ENCODE measurements at regions of chr1 and their contacts with region 1.

Region 1: DNA sequence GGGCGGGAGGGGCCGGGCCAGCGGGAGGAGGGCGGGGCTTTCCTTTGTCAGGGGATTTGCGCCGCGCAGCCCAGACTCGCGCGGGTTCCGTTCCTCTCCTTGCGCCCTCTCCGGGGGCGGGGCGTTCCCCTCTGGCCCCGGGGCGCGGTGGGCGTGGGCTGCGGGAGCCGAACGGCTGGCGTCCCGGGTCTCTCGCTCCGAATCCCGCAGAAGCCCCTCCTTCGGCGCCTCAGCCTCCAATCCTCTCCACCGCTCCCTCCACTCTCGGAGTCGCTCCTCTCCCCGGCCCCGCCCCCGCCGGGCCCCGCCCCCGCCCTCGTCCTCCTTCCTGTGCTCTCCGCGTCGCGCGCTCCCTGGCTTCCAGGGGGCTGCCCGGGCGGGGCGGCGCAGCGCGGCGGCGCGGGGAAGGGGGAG is 82.8 kb upstream of the BMP8A start:
- DNase-seq: peak; percentile 93
- ATAC-seq: peak; percentile 84
- H3K4me3 ChIP-seq: peak overlapping the region; percentile 70 to 89 (median 88); a peak in 5 of 6 replicates
- H3K27ac ChIP-seq: peak overlapping the region; percentile 97
- H3K4me1 ChIP-seq: peaks cover 70% of the 10 kb centered on the region
- H3K27me3 ChIP-seq: no peaks in the 10 kb centered on the region; a peak in 1 of 5 replicates
- CTCF ChIP-seq: no peak
- EP300 ChIP-seq: no peak
- POLR2A ChIP-seq: no peak; a peak in 1 of 4 replicates
- RAD21 ChIP-seq: no peak

Region 2: DNA sequence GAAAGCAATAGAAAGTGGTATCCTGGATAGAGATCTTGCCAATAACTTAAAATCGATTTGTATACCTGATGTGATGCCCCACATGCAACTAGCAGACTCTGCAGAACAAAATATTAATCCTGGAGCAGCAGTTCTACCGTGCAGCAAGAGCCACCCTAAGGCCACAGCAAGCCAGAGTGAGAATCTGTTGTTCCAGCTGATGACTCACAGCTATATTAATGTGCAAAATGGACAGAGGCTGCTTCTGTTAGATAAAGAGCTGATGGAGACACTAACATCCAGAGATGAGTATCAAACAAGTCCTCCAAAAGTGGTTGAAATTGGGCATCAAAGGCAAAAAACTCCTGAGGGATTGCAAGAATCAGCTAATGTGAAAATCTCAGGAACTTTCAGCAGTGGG is 76.4 kb before region 1 on chr1:
- CTCF ChIA-PET with region 1: no interaction called
- POLR2A ChIA-PET with region 1: no interaction called
- in situ Hi-C with region 1: no loop called
- intact Hi-C with region 1: no loop called
- DNase-seq: no peak
- ATAC-seq: no peak
- H3K4me3 ChIP-seq: no peak overlapping the region
- H3K27ac ChIP-seq: no peak overlapping the region
- H3K4me1 ChIP-seq: no peaks in the 10 kb centered on the region
- H3K27me3 ChIP-seq: no peaks in the 10 kb centered on the region
- CTCF ChIP-seq: no peak
- EP300 ChIP-seq: no peak
- POLR2A ChIP-seq: no peak
- RAD21 ChIP-seq: no peak

Region 3: DNA sequence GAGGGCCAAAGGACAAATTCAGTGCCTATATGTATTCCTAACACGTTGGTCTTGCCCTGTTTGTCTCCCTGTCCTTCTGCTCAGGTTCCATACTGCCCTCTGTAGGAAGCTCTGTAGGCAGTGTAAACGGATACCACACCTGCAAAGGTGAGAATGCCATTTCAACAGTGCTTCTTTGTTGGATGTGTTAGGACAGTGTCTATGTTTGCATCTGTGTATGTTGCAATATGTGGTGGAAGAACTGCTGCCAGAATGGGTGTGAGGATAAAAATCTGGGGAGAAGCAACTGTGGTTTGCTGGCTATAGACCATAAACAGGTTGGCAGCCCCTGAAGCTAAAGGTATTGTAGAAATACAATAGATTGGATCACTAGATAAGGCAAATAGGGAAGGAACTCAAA is 30.3 kb before region 1 on chr1:
- CTCF ChIA-PET with region 1: interaction called, 5 read pairs
- POLR2A ChIA-PET with region 1: interaction called, 9 read pairs
- in situ Hi-C with region 1: no loop called
- intact Hi-C with region 1: loop called (anchors 1 kb)
- DNase-seq: peak; percentile 89
- ATAC-seq: peak; percentile 99
- H3K4me3 ChIP-seq: no peak overlapping the region
- H3K27ac ChIP-seq: no peak overlapping the region
- H3K4me1 ChIP-seq: peaks cover 11% of the 10 kb centered on the region
- H3K27me3 ChIP-seq: no peaks in the 10 kb centered on the region
- CTCF ChIP-seq: peak; percentile 93
- EP300 ChIP-seq: peak in 1 of 2 experiments; percentile 42; a peak in 1 of 4 replicates
- POLR2A ChIP-seq: no peak
- RAD21 ChIP-seq: peak; percentile 42; the same call in 1 of the 2 replicates

Region 4: GRCh38 chr1:39391691-39392679 is 16.7 kb before region 1 on chr1:
- CTCF ChIA-PET with region 1: interaction called, 3 read pairs
- POLR2A ChIA-PET with region 1: interaction called, 22 read pairs
- in situ Hi-C with region 1: no loop called
- intact Hi-C with region 1: loop called (anchors 2 kb)
- DNase-seq: peak; percentile 85
- ATAC-seq: peak; percentile 93
- H3K4me3 ChIP-seq: peak overlapping the region in 1 of 3 experiments; percentile 24; a peak in 1 of 6 replicates
- H3K27ac ChIP-seq: peak overlapping the region; percentile 83
- H3K4me1 ChIP-seq: peaks cover 52% of the 10 kb centered on the region
- H3K27me3 ChIP-seq: no peaks in the 10 kb centered on the region
- CTCF ChIP-seq: no peak
- EP300 ChIP-seq: no peak
- POLR2A ChIP-seq: peak in 1 of 2 experiments; percentile 48; a peak in 1 of 4 replicates
- RAD21 ChIP-seq: no peak

Region 5: DNA sequence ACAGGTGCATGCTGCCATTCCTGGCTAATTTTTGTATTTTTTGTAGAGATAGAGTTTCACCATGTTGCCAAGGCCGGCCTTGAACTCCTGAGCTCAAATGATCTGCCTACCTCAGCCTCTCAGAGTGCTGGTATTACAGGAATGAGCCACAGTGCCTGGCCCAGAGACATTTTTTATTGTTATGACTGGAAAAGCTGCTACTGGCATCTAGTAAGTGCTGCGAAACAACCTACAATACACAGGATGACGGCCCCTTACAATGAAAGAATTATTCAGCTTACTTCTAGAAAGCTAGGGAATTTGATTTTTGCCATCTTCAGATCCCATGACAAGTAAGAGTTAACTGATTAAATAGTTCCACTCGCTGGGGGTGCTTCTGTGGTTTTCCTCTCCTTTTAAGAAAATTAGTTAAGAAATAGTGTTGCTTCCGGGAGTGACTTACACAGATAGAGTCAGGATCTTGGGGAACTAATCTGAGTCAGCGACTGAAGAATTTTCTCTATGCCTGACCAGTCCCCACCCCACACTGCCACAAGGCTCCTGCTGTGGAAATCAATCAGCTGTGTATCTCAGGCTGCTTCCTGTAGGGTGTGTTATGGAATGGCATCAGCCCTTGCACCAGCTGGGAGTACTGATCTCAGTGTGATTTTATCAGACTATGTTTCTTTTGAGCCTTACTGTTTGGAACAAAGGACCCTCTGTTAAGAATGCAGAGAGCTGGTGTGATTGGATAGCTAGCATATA is 10.2 kb before region 1 on chr1:
- CTCF ChIA-PET with region 1: no interaction called
- POLR2A ChIA-PET with region 1: interaction called, 41 read pairs
- in situ Hi-C with region 1: no loop called
- intact Hi-C with region 1: loop called (anchors 2 kb)
- DNase-seq: peak; percentile 85
- ATAC-seq: peak; percentile 93
- H3K4me3 ChIP-seq: no peak overlapping the region; a peak in 1 of 6 replicates
- H3K27ac ChIP-seq: peak overlapping the region; percentile 70
- H3K4me1 ChIP-seq: peaks cover 46% of the 10 kb centered on the region
- H3K27me3 ChIP-seq: no peaks in the 10 kb centered on the region
- CTCF ChIP-seq: no peak
- EP300 ChIP-seq: no peak
- POLR2A ChIP-seq: no peak
- RAD21 ChIP-seq: no peak

Region 6: DNA sequence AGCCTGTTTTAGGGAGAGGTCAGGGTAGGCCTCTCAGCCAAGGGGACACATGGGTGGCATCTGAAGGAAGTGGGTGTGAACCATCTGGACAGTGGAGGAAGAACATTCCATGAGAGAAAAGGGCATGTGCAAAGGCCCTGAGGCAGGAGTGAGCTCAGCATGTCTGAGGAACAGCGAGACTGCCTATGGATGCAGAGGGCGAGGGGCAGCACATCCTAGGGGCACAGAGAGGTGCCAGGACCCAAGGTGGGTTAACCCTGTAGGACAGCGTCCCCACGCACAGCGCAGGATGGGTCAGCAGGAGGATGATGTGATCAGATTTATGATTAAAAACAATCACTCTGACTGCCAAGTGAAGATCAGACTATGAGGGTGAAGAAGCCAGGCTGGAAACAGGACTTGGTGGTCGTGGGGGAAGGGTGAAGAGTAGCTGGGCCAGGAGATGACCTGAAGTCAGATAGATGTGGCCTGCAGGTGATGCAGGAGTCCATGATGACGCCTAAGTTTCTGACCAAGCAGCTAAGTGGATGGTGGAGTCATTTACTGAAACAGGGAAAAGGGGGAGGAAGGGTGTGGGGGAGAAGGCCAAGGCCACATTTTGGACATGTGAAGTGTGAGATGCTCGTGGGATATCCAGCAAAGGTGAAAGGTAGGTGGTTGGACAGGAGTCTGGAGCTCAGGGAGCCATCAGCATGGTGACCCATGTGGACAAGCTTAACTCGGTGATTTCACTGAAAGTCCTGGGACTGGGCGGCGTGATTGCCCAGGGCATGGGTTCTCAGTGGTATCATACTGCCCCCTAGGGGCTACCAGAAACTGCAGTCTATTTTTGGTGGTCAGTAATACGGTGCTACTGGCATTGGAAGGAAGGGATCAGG is 130.2 kb after region 1 on chr1:
- CTCF ChIA-PET with region 1: no interaction called
- POLR2A ChIA-PET with region 1: no interaction called
- in situ Hi-C with region 1: no loop called
- intact Hi-C with region 1: loop called (anchors 5 kb)
- DNase-seq: peak; percentile 71
- ATAC-seq: peak; percentile 99
- H3K4me3 ChIP-seq: no peak overlapping the region
- H3K27ac ChIP-seq: no peak overlapping the region
- H3K4me1 ChIP-seq: no peaks in the 10 kb centered on the region
- H3K27me3 ChIP-seq: no peaks in the 10 kb centered on the region
- CTCF ChIP-seq: peak; percentile 93
- EP300 ChIP-seq: no peak
- POLR2A ChIP-seq: no peak
- RAD21 ChIP-seq: peak; percentile 83

Measured in HepG2 (cell line).